ENCODE measurements at regions of chr4 and their contacts with region 1.

Region 1: GRCh38 chr4:138494931-138495330 is 252.8 kb upstream of the SLC7A11 start:
- DNase-seq: peak; percentile 51 to 56
- H3K4me3 ChIP-seq: no peak overlapping the region
- H3K27ac ChIP-seq: no peak overlapping the region
- H3K4me1 ChIP-seq: no peaks in the 10 kb centered on the region
- H3K27me3 ChIP-seq: no peaks in the 10 kb centered on the region
- CTCF ChIP-seq: peak; percentile 38 to 70 (median 69)
- EP300 ChIP-seq: no peak
- POLR2A ChIP-seq: no peak
- RAD21 ChIP-seq: peak; percentile 82 to 85

Region 2: DNA sequence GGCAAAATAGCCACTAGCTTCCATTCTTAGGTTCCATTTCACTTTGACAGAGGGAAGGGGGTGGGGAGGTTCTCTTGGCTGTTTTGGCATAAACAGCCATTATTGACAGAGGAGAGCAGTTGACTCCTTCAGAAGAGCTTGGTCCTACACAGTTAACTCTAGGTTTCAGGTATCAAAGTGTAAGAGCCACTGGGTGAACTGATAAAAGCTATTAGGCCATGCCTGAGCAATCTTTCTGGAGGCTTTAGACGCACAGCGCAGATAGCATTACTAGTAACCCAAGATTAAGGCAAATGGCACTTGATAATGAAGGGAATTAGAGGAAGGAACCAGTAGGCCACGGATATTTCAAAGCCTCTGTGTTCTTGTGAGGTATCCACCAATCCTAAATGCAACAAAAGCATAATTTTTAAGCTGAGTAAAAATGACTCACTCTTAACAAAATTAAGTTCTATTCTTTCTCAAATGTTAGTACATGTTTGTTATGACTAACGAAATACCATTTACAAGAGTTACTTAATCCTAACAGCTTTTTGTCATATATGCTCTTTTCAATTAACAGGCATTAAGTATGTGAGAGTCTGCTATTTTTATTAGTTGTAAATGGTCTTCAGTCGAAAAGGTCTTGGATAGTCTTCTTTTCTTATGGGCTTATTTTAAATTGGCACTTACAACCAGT is 306.4 kb before region 1 on chr4:
- CTCF ChIA-PET with region 1: interaction called, 12 read pairs
- POLR2A ChIA-PET with region 1: no interaction called
- DNase-seq: no peak
- H3K4me3 ChIP-seq: no peak overlapping the region
- H3K27ac ChIP-seq: no peak overlapping the region
- H3K4me1 ChIP-seq: peaks cover 0 to 7% (median 5%) of the 10 kb centered on the region in 4 experiments; a peak in 2 of 7 replicates
- H3K27me3 ChIP-seq: no peaks in the 10 kb centered on the region
- CTCF ChIP-seq: no peak
- EP300 ChIP-seq: no peak
- POLR2A ChIP-seq: no peak
- RAD21 ChIP-seq: no peak